ENCODE measurements at regions of chr20 and their contacts with region 1.

Region 1: DNA sequence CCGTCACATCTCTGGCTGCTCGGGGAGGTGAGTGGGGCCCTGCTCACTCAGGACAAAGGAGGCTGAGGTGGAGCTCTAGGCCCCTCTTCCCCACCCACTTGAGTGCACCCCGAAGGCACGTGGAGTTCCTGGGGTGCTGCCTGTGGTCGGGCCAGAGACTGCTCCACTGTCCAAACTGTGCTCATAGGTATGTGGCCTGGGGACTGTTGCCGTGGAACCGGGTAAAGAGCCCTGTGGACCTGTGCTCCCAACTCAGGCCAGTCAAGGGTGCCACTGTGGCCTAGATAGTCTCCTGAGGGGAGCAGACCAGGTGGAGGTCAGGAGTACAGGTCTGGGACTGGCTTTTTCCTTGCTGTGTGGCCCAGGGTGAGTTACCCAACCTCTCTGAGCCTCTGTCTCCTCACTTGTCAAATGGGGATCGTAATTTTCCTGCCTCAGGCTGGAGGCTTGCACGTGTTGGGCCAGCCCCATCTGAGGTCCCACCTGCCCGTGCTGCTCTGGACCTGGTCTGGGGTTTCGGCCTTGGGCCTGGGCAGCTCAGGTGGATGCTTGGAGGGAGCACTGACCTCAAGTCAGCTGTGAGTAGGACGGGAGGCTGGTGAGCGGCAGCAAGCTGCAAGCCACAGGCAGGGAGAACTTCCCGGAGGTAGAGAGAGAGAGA is 12.4 kb upstream of the NPBWR2 start:
- DNase-seq: peak in 1 of 2 experiments; percentile 55
- H3K4me3 ChIP-seq: no peak overlapping the region
- H3K4me3 Mint-ChIP-seq: no peak overlapping the region
- H3K27ac Mint-ChIP-seq: peak overlapping the region; percentile 44
- H3K4me1 ChIP-seq: no peaks in the 10 kb centered on the region
- H3K4me1 Mint-ChIP-seq: no peaks in the 10 kb centered on the region
- H3K27me3 ChIP-seq: no peaks in the 10 kb centered on the region
- H3K27me3 Mint-ChIP-seq: peaks cover 14% of the 10 kb centered on the region
- CTCF ChIP-seq: no peak

Region 2: GRCh38 chr20:63791497-63792156 is 328.2 kb before region 1 on chr20:
- CTCF ChIA-PET with region 1: no interaction called
- POLR2A ChIA-PET with region 1: no interaction called
- intact Hi-C with region 1: no loop called
- DNase-seq: no peak
- H3K4me3 ChIP-seq: no peak overlapping the region
- H3K4me3 Mint-ChIP-seq: no peak overlapping the region
- H3K27ac Mint-ChIP-seq: peak overlapping the region; percentile 15
- H3K4me1 ChIP-seq: no peaks in the 10 kb centered on the region
- H3K4me1 Mint-ChIP-seq: no peaks in the 10 kb centered on the region
- H3K27me3 ChIP-seq: no peaks in the 10 kb centered on the region
- H3K27me3 Mint-ChIP-seq: no peaks in the 10 kb centered on the region
- CTCF ChIP-seq: no peak

Region 3: DNA sequence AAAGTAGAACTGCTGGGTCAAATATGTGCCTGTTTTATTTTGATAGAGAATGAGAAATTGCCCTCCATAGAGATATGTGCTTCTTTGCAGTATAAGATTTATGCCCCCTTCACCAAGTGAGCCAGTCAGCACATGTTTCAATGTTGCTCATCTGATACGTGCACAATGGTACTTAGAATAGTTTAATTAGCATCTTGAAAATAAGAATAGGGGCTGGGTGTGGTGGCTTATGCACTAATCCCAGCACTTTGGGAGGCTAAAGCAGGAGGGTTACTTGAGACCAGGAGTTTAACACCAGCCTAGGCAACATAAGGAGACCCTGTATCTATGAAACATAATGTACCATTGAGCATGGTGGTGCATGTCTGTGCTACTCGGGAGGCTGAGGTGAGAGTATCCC is 104.2 kb before region 1 on chr20:
- CTCF ChIA-PET with region 1: no interaction called
- POLR2A ChIA-PET with region 1: no interaction called
- intact Hi-C with region 1: no loop called
- DNase-seq: no peak
- H3K4me3 ChIP-seq: no peak overlapping the region
- H3K4me3 Mint-ChIP-seq: no peak overlapping the region
- H3K27ac Mint-ChIP-seq: no peak overlapping the region
- H3K4me1 ChIP-seq: no peaks in the 10 kb centered on the region
- H3K4me1 Mint-ChIP-seq: no peaks in the 10 kb centered on the region
- H3K27me3 ChIP-seq: no peaks in the 10 kb centered on the region
- H3K27me3 Mint-ChIP-seq: no peaks in the 10 kb centered on the region
- CTCF ChIP-seq: no peak

Region 4: DNA sequence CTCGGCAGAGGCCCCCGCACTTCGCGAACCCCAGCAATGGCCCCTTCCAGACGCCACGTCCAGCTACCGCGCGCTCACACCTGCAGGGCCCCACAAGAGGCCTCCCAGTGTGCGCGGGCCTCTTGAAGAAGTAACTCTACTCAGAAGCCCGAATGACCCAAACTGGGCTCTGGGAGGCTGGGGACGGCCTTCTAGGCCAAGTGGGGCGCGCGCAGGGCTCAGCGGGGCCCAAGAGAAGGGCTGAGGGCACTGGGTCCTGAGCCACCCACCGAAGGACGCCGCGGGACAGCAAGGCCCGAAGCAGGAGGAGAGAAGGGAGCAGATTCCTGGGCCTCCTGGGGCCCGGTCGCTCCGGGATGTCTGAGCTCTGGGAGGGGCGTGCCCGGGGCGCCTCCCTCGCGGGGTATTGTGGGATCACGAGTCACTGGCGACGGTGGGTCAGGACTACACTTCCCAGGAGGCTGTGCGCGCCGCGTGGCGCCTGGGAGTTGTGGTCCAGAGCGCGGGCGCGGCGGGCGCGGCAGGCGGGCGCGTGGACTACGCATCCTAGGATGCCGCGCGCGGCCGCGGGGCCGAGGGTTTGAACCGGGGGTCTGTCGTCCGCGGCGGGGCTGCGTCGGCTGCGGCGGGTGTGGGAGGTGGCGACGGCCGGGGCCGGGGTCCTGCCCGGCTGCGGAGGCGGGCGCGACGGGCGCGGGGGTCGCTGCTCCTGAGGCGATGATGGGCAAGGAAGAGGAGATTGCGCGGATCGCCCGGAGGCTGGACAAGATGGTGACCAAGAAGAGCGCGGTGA is 57.0 kb before region 1 on chr20 and contains the start of gene TCEA2:
- CTCF ChIA-PET with region 1: interaction called, 7 read pairs
- POLR2A ChIA-PET with region 1: no interaction called
- intact Hi-C with region 1: loop called (anchors 1 kb)
- DNase-seq: peak; percentile 99 to 100
- H3K4me3 ChIP-seq: peak within 1 kb of the TSS; percentile 74
- H3K4me3 Mint-ChIP-seq: peak within 1 kb of the TSS; percentile 81
- H3K27ac Mint-ChIP-seq: peak within 1 kb of the TSS; percentile 16
- H3K4me1 ChIP-seq: peaks cover 23% of the 10 kb centered on the region
- H3K4me1 Mint-ChIP-seq: peaks cover 28% of the 10 kb centered on the region
- H3K27me3 ChIP-seq: no peaks in the 10 kb centered on the region
- H3K27me3 Mint-ChIP-seq: no peaks in the 10 kb centered on the region
- CTCF ChIP-seq: no peak
- total RNA-seq, gene TCEA2: 39.9 and 48.3 TPM in 2 replicates

Region 5: DNA sequence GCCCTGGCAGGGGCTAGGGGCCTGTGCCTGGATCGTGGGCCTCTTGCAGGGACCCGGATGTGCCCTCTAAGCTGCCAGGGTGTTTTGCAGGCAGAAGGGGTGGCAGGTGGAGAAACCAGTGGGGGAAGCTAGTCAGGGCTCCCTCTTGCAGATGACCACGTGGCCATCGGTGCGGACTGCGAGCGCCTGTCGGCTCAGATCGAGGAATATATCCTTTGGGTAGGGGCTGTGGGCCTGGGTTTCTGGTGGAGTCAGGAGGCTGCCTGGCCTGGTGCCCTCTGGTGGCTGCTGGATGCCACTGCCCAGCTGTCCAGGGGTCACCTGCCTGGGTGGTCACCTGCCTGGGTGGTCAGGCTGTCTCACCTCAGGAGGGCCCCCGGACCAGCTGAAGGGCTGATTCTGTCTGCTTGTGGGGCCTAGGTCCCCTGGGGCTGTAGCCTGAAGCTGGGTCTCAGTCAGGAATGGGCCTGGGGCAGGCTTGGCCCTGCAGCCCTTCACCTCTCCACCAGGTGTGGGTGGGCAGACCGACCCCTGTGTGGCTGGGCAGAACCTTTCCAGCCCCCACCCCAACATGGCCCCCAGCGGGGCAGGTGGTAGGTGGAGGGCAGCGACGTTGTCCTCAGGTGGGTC is 50.1 kb before region 1 on chr20:
- CTCF ChIA-PET with region 1: interaction called, 3 read pairs
- POLR2A ChIA-PET with region 1: no interaction called
- intact Hi-C with region 1: loop called (anchors 1 kb)
- DNase-seq: peak; percentile 84 to 88
- H3K4me3 ChIP-seq: no peak overlapping the region
- H3K4me3 Mint-ChIP-seq: no peak overlapping the region
- H3K27ac Mint-ChIP-seq: no peak overlapping the region
- H3K4me1 ChIP-seq: no peaks in the 10 kb centered on the region
- H3K4me1 Mint-ChIP-seq: peaks cover 12% of the 10 kb centered on the region
- H3K27me3 ChIP-seq: no peaks in the 10 kb centered on the region
- H3K27me3 Mint-ChIP-seq: no peaks in the 10 kb centered on the region
- CTCF ChIP-seq: peak; percentile 99

Region 6: DNA sequence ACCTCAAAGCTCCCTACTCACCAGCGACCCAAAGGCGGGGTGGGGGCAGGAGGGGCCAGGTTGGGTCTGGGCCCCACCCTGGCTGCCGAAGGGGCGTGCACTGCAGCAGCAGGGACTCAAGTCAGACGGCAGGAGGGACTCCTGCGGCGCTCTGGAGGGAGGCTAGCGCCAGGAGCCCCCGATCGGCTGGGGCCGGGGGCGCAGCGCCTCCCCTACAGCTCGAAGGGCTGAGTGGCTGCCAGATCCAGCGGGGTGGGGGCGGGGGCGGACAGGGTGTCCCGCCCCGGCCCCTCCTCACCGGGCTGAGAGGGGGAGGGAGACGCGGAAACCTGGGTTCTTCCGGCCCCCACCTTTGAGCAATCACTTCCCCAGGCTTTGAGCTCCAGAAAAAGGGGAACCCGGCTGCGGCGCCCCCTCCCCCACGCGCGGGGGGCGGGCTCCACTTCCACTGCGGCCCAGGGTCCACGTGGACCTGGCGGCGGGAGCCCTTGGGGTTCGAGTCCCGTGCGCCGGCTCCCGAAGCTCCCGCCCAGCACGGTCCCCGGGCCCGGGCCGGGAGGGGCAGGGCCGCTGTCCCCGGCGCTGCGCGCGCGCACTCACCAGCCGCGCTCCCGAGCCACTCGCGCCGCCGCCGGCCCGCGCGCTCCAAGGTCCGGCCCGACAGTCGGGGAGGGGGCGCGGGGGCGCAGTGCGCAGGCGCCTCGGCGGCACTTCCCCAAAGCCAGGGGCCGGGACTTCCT is 40.4 kb before region 1 on chr20 and contains the start of gene RGS19:
- CTCF ChIA-PET with region 1: interaction called, 49 read pairs
- POLR2A ChIA-PET with region 1: interaction called, 3 read pairs
- intact Hi-C with region 1: loop called (anchors 1 kb)
- DNase-seq: peak; percentile 91 to 98
- H3K4me3 ChIP-seq: peak within 1 kb of the TSS; percentile 96
- H3K4me3 Mint-ChIP-seq: peak within 1 kb of the TSS; percentile 88
- H3K27ac Mint-ChIP-seq: peak within 1 kb of the TSS; percentile 75
- H3K4me1 ChIP-seq: peaks cover 32% of the 10 kb centered on the region
- H3K4me1 Mint-ChIP-seq: peaks cover 22% of the 10 kb centered on the region
- H3K27me3 ChIP-seq: peaks cover 2% of the 10 kb centered on the region
- H3K27me3 Mint-ChIP-seq: peaks cover 4% of the 10 kb centered on the region
- CTCF ChIP-seq: peak in 1 of 2 experiments; percentile 18
- total RNA-seq, gene RGS19: 29.3 and 34.3 TPM in 2 replicates

Region 7: DNA sequence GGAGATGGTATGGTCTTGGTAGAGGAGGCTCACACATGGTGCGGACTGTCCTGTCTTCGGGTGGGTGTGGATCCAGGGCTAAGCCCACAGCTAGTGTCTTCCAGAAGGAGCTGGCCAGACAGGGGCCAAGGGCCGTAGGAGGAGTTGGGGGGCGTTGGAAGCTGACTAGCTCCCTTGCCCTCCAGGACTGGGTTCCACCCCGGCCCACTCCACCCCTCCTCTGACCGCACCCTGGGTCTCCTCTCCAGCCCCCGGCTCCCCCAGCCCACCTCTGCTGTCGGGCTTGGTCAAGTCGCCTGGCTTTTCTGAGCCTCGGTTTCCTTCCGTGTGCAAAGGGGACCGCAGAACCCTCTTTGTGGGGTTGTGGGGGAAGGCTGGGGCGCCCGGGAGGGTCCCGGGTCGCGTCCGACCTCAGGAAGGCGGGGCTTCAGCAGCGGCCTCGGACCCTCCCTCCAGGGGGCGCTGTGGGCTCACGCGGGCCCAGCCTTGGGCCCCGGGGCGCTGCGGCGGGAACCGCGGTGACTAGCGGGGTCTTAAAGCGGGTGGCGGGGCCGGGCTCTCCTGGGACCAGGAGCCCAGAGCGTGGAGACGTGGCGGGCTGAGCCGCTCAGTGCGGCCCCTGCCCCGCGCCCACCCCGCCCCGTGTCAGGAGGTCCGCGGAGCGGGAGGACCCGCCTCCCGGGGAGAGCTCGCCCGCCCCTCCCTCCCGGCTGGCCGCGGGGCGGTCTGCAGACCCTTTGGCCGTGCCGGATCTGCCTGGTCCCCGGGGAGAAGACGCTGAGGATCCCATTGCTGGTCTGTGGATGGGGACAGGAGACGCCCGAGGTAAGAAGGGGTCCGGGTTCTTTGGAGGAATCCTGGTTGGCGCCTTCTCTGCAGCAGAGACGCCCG is 17.8 kb before region 1 on chr20:
- CTCF ChIA-PET with region 1: interaction called, 17 read pairs
- POLR2A ChIA-PET with region 1: no interaction called
- intact Hi-C with region 1: loop called (anchors 1 kb)
- DNase-seq: peak; percentile 69 to 91
- H3K4me3 ChIP-seq: peak overlapping the region; percentile 52
- H3K4me3 Mint-ChIP-seq: peak overlapping the region; percentile 77
- H3K27ac Mint-ChIP-seq: no peak overlapping the region
- H3K4me1 ChIP-seq: peaks cover 3% of the 10 kb centered on the region; the same call in 1 of the 2 replicates
- H3K4me1 Mint-ChIP-seq: no peaks in the 10 kb centered on the region
- H3K27me3 ChIP-seq: peaks cover 4% of the 10 kb centered on the region; the same call in 1 of the 2 replicates
- H3K27me3 Mint-ChIP-seq: peaks cover 23% of the 10 kb centered on the region
- CTCF ChIP-seq: peak; percentile 96 to 99

Region 8: GRCh38 chr20:64131406-64131805 is 11.6 kb after region 1 on chr20:
- CTCF ChIA-PET with region 1: no interaction called
- POLR2A ChIA-PET with region 1: no interaction called
- intact Hi-C with region 1: no loop called
- DNase-seq: peak in 1 of 2 experiments; percentile 56
- H3K4me3 ChIP-seq: no peak overlapping the region
- H3K4me3 Mint-ChIP-seq: no peak overlapping the region
- H3K27ac Mint-ChIP-seq: no peak overlapping the region
- H3K4me1 ChIP-seq: no peaks in the 10 kb centered on the region
- H3K4me1 Mint-ChIP-seq: no peaks in the 10 kb centered on the region
- H3K27me3 ChIP-seq: 0 out of 2 replicates have a peak, but pooled peaks cover 1% of the 10 kb centered on the region
- H3K27me3 Mint-ChIP-seq: peaks cover 15% of the 10 kb centered on the region
- CTCF ChIP-seq: peak; percentile 46 to 57

Region 9: DNA sequence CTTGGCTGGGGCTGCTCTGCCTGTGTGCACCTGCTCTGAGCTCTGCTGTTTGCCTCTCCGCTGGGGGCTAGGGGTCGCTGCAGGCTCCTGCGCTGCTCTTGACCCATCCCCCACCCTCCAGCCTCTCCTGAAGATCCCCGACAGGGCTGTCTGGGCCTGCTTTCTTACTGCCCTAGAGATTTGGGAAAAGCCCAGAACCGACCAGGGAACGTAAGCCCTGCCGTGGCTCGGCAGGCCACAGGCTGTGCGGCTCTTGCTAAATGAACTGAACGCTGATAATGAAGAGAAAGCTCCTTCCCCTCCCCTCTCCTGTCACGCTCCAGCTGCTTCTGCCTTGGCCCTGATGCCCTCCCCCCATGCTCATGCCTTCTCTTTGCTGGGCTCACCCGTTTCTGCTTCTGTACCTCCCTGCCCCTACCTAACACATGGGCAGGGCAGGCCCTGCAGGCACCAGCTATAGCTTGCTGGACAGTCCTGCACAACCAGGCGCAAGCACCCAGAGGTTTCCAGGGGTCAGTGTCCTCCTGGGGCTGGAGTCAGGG is 103.8 kb after region 1 on chr20:
- CTCF ChIA-PET with region 1: no interaction called
- POLR2A ChIA-PET with region 1: no interaction called
- intact Hi-C with region 1: loop called (anchors 5 kb)
- DNase-seq: peak in 1 of 2 experiments; percentile 70
- H3K4me3 ChIP-seq: no peak overlapping the region
- H3K4me3 Mint-ChIP-seq: no peak overlapping the region
- H3K27ac Mint-ChIP-seq: peak overlapping the region; percentile 30
- H3K4me1 ChIP-seq: peaks cover 51% of the 10 kb centered on the region
- H3K4me1 Mint-ChIP-seq: peaks cover 20% of the 10 kb centered on the region
- H3K27me3 ChIP-seq: no peaks in the 10 kb centered on the region
- H3K27me3 Mint-ChIP-seq: peaks cover 14% of the 10 kb centered on the region
- CTCF ChIP-seq: peak; percentile 31 to 63

Region 10: DNA sequence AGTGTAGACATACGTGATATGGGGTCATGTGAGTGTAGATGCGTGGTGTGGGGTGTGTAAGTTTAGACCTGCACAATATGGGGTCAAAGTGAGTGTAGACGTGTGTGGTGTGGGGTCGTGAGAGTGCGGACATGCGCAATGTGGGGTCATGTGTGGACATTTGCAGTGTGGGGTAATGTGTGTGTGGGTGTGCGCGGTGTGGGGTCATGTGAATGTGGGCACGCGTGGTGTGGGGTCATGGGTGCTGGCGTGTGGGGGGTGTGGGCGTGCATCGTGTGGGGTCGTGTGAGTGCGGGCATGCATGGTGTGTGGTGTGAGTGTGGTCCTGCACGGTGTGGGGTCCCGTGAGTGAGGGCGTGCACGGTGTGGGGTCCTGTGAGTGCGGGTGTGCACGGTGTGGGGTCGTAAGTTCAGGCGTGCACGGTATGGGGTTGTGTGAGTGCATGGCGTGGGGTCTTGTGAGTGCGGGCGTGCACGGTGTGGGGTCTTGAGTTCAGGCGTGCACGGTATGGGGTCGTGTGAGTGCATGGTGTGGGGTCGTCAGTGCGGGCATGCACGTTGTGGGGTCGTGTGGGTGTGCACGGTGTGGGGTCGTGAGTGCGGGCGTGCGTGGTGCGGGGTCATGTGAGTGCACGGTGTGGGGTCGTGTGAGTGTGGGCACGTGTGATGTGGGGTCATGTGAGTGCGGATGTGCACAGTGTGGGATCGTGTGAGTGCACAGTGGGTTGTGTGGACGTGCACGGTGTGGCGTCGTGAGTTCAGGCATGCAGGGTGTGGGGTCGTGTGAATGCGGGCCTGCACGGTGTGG is 150.0 kb after region 1 on chr20:
- CTCF ChIA-PET with region 1: no interaction called
- POLR2A ChIA-PET with region 1: no interaction called
- intact Hi-C with region 1: no loop called
- DNase-seq: no peak
- H3K4me3 ChIP-seq: no peak overlapping the region
- H3K4me3 Mint-ChIP-seq: no peak overlapping the region
- H3K27ac Mint-ChIP-seq: no peak overlapping the region
- H3K4me1 ChIP-seq: no peaks in the 10 kb centered on the region
- H3K4me1 Mint-ChIP-seq: no peaks in the 10 kb centered on the region
- H3K27me3 ChIP-seq: no peaks in the 10 kb centered on the region
- H3K27me3 Mint-ChIP-seq: no peaks in the 10 kb centered on the region
- CTCF ChIP-seq: no peak